SK-N-SH (cell line): ENCODE measurements at regions of chr19 and their contacts with region 1.

Region 1: DNA sequence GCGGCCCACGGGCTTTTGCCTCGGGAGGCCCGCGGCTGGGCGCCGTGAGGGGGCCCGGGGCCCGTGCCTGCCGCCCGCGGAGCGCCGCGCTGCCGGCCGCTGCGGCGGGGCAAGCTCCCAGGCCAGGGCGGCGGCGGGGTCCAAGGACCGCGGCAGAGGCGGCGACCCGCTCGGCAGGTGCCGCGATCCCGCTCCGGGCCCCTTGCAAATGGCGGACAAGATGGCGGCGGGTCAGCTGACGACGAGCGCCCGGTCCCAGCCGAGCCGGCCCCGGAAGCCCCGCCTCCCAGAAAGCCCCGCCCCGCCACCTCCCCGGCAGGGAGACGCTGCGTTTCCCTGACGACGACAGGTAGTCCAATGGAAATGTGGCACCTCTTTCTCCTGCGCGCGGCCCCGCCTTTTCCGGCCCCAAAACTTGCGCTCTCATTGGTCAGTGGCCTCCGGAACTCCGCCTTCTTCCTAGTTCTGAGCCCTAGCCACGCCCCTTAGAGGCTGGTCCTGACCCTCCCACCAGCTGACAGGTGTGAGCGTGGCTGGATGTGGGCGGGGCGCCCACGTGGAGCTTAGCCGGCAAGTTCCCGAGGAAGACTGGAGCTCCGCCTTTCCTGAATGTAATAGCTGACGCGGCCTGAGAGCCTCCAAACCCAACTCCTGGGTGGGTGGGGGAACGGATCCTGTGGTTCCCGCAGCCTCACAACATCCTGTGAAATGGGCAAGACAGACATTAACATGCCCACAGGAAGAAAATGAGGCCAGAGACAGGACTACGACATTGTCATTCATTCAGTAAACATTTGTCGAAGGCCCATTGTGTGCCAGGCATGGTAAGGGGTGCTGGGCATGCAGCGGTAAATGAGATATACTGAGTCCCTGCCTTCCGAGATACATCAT is at the start of gene AP3D1:
- DNase-seq: peak; percentile 100
- H3K4me3 ChIP-seq: peak within 1 kb of the TSS; percentile 80 to 81
- H3K27ac ChIP-seq: peak within 1 kb of the TSS; percentile 60 to 89
- H3K4me1 ChIP-seq: peaks cover 5 to 15% of the 10 kb centered on the region in 2 experiments; a peak in 2 of 4 replicates
- H3K27me3 ChIP-seq: no peaks in the 10 kb centered on the region
- CTCF ChIP-seq: no peak
- EP300 ChIP-seq: no peak
- RAD21 ChIP-seq: no peak
- polyA plus RNA-seq, gene AP3D1: 79.7 and 127 TPM in 2 replicates

Region 2: DNA sequence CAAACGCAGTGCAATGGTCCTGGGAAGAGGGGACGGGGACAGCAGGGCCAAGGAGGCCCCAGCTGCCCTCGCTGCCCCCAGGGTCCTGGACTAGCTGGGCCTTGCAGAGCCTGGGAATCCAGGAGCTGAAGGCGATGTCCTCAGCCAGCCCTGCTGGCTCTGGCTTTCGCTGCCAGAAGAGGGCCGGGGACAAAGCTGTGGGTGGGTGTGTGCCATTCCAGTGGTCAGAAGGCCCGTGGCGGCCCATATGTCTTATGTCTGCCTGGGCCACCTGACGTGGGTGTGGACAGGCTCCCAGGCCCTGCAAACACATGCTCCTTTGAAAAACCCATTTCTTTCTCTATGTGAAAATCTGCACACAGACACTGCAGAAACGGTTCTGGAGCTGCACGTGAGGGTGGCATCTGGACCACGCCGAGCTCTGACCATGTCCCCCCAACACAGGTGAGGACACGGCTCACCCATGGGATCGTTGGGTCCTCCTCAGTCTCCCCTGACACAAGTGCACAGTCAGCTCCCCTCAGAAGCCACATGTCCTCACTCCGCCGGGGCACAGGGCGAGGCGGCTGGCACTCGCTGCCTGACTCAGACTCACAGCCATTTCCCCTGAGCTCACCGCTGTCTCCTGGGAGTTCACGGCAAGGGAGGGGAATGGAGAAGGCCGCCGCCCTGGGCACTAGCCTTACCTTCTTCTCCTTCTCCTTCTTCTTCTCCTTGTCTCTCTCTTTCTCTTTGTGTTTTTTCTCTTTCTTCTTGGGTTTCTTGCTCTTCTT is 38.0 kb before region 1 on chr19:
- CTCF ChIA-PET with region 1: no interaction called
- POLR2A ChIA-PET with region 1: no interaction called
- DNase-seq: no peak
- H3K4me3 ChIP-seq: no peak overlapping the region
- H3K27ac ChIP-seq: no peak overlapping the region
- H3K4me1 ChIP-seq: no peaks in the 10 kb centered on the region
- H3K27me3 ChIP-seq: no peaks in the 10 kb centered on the region
- CTCF ChIP-seq: no peak
- EP300 ChIP-seq: no peak
- RAD21 ChIP-seq: no peak

Region 3: GRCh38 chr19:2135474-2136402 is 15.8 kb before region 1 on chr19:
- CTCF ChIA-PET with region 1: no interaction called
- POLR2A ChIA-PET with region 1: no interaction called
- DNase-seq: no peak
- H3K4me3 ChIP-seq: no peak overlapping the region
- H3K27ac ChIP-seq: no peak overlapping the region
- H3K4me1 ChIP-seq: no peaks in the 10 kb centered on the region
- H3K27me3 ChIP-seq: no peaks in the 10 kb centered on the region
- CTCF ChIP-seq: no peak
- EP300 ChIP-seq: no peak
- RAD21 ChIP-seq: no peak

Region 4: GRCh38 chr19:2221918-2222317 is 70.3 kb after region 1 on chr19:
- CTCF ChIA-PET with region 1: interaction called, 31 read pairs
- POLR2A ChIA-PET with region 1: no interaction called
- DNase-seq: peak; percentile 70
- H3K4me3 ChIP-seq: no peak overlapping the region
- H3K27ac ChIP-seq: peak overlapping the region in 1 of 2 experiments; percentile 44; a peak in 1 of 4 replicates
- H3K4me1 ChIP-seq: peaks cover 0 to 13% of the 10 kb centered on the region in 2 experiments; a peak in 1 of 4 replicates
- H3K27me3 ChIP-seq: no peaks in the 10 kb centered on the region
- CTCF ChIP-seq: peak; percentile 40
- EP300 ChIP-seq: no peak
- RAD21 ChIP-seq: peak; percentile 15; the same call in 1 of the 2 replicates